ENCODE measurements at regions of chr20 and their contacts with region 1.

Region 1: GRCh38 chr20:62603021-62603906 is 39.0 kb upstream of the SLCO4A1 start:
- DNase-seq: peak; percentile 96 to 98 (median 96)
- H3K4me3 ChIP-seq: peak overlapping the region in 2 of 3 experiments; percentile 14 to 65
- H3K4me3 Mint-ChIP-seq: peak overlapping the region; percentile 69 to 89
- H3K27ac ChIP-seq: peak overlapping the region; percentile 96 to 99
- H3K27ac Mint-ChIP-seq: peak overlapping the region; percentile 97 to 99 (median 98)
- H3K4me1 ChIP-seq: peaks cover 86 to 96% of the 10 kb centered on the region in 2 donors
- H3K4me1 Mint-ChIP-seq: peaks cover 90% of the 10 kb centered on the region
- H3K27me3 ChIP-seq: no peaks in the 10 kb centered on the region
- H3K27me3 Mint-ChIP-seq: peaks cover 0 to 4% (median 0%) of the 10 kb centered on the region in 3 donors
- CTCF ChIP-seq: no peak

Region 2: DNA sequence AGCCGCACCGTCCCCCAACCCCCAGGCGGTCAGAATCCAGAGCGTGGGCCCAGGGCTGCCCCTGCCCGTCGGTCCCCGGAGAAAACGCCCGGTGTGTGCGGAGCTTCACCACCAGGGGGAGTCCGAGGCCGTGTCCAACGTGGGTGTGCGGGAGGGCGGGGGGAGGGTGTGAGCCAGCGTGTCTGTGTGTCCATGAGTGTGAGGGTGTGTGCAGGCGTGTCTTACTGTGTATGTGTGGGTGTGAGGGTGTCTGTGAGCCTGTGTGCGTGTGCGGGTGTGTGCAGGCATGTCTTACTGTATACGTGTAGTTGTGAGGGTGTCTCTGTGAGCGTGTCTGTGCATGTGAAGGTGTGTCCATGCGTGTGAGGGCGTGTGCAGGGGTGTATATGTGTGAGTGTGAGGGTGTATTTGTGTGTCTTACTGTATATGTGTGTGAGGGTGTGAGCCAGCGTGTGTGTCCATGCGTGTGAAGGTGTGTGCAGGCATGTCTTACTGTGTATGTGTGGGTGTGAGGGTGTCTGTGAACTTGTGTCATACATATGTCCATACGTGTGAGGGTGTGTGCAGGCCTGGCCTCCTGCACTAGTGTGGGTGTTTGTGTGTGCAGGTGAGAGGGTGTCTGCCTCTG is 102.9 kb before region 1 on chr20:
- intact Hi-C with region 1: loop called in 1 of 2 experiments (anchors 5 kb)
- DNase-seq: peak; percentile 65 to 83 (median 72)
- H3K4me3 ChIP-seq: no peak overlapping the region
- H3K4me3 Mint-ChIP-seq: peak overlapping the region in 1 of 2 donors; percentile 2
- H3K27ac ChIP-seq: no peak overlapping the region
- H3K27ac Mint-ChIP-seq: peak overlapping the region; percentile 12 to 85 (median 51)
- H3K4me1 ChIP-seq: peaks cover 3 to 14% of the 10 kb centered on the region in 2 donors
- H3K4me1 Mint-ChIP-seq: peaks cover 20% of the 10 kb centered on the region
- H3K27me3 ChIP-seq: peaks cover 0 to 3% of the 10 kb centered on the region in 2 donors
- H3K27me3 Mint-ChIP-seq: peaks cover 6 to 8% (median 6%) of the 10 kb centered on the region in 3 donors
- CTCF ChIP-seq: peak; percentile 80

Region 3: GRCh38 chr20:62623488-62624324 is 20.4 kb after region 1 on chr20:
- intact Hi-C with region 1: loop called in 1 of 2 experiments (anchors 1 kb)
- DNase-seq: peak; percentile 89 to 90 (median 89)
- H3K4me3 ChIP-seq: peak overlapping the region; percentile 0 to 65 (median 5)
- H3K4me3 Mint-ChIP-seq: peak overlapping the region; percentile 67 to 82
- H3K27ac ChIP-seq: peak overlapping the region; percentile 91 to 96
- H3K27ac Mint-ChIP-seq: peak overlapping the region; percentile 93 to 98 (median 95)
- H3K4me1 ChIP-seq: peaks cover 49 to 57% of the 10 kb centered on the region in 2 donors
- H3K4me1 Mint-ChIP-seq: peaks cover 49% of the 10 kb centered on the region
- H3K27me3 ChIP-seq: no peaks in the 10 kb centered on the region
- H3K27me3 Mint-ChIP-seq: peaks cover 0 to 3% (median 2%) of the 10 kb centered on the region in 3 donors
- CTCF ChIP-seq: no peak

Region 4: GRCh38 chr20:62665153-62665754 is 62.0 kb after region 1 on chr20:
- intact Hi-C with region 1: no loop called
- DNase-seq: no peak
- H3K4me3 ChIP-seq: no peak overlapping the region
- H3K4me3 Mint-ChIP-seq: no peak overlapping the region
- H3K27ac ChIP-seq: no peak overlapping the region
- H3K27ac Mint-ChIP-seq: no peak overlapping the region
- H3K4me1 ChIP-seq: peaks cover 19 to 36% of the 10 kb centered on the region in 2 donors
- H3K4me1 Mint-ChIP-seq: peaks cover 31% of the 10 kb centered on the region
- H3K27me3 ChIP-seq: no peaks in the 10 kb centered on the region
- H3K27me3 Mint-ChIP-seq: peaks cover 0 to 2% (median 1%) of the 10 kb centered on the region in 3 donors
- CTCF ChIP-seq: no peak

Region 5: DNA sequence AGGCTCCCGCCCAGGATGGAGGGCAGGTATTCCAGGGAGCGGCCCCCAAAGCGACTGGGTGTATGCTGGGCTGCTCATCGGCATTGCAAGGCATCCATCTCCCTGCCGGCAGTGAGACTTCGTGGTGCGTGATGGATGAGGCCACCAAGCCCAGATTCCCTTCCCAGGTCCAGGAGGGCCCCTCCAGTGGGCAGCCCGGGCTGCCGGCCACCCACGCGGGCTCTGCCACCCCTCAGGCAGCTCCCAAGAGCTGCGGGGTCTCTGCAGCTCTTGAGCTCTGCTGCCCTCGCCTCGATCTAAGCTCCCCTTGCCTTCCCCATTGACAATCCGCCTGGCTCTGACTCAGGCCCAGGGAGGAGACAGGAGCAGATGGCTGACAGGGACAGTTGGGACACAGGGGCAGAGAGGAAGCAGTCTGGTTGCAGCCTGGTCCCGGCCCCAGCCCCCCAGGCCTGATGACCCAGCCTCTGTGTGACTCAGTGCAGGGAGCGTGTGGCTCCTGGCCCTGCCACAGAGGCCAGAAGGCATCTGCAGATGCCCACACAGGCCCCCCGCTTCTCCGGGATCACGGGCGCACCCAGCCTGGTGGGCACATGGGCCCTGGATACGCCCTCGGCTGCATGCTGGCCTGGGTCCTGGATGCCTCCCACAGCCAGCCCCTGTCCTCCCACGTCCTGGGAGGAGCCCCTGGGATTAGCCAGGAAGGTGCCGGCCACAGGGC is 72.1 kb after region 1 on chr20:
- intact Hi-C with region 1: loop called in 1 of 2 experiments (anchors 2 kb)
- DNase-seq: peak; percentile 95 to 98 (median 97)
- H3K4me3 ChIP-seq: no peak overlapping the region
- H3K4me3 Mint-ChIP-seq: peak overlapping the region; percentile 9 to 63
- H3K27ac ChIP-seq: peak overlapping the region; percentile 14 to 86
- H3K27ac Mint-ChIP-seq: peak overlapping the region; percentile 38 to 92 (median 81)
- H3K4me1 ChIP-seq: peaks cover 71 to 94% of the 10 kb centered on the region in 2 donors
- H3K4me1 Mint-ChIP-seq: peaks cover 85% of the 10 kb centered on the region
- H3K27me3 ChIP-seq: no peaks in the 10 kb centered on the region
- H3K27me3 Mint-ChIP-seq: peaks cover 1 to 7% (median 2%) of the 10 kb centered on the region in 3 donors
- CTCF ChIP-seq: no peak

Region 6: GRCh38 chr20:62786157-62786556 is 182.9 kb after region 1 on chr20:
- intact Hi-C with region 1: loop called (anchors 2 to 5 kb)
- DNase-seq: no peak
- H3K4me3 ChIP-seq: no peak overlapping the region
- H3K4me3 Mint-ChIP-seq: no peak overlapping the region
- H3K27ac ChIP-seq: peak overlapping the region in 1 of 2 donors; percentile 92
- H3K27ac Mint-ChIP-seq: peak overlapping the region in 4 of 7 donors; percentile 19 to 84 (median 81)
- H3K4me1 ChIP-seq: peaks cover 14 to 24% of the 10 kb centered on the region in 2 donors
- H3K4me1 Mint-ChIP-seq: peaks cover 28% of the 10 kb centered on the region
- H3K27me3 ChIP-seq: no peaks in the 10 kb centered on the region
- H3K27me3 Mint-ChIP-seq: peaks cover 1 to 6% (median 4%) of the 10 kb centered on the region in 3 donors
- CTCF ChIP-seq: no peak

Region 7: GRCh38 chr20:62808211-62808865 is 205.1 kb after region 1 on chr20:
- intact Hi-C with region 1: loop called in 1 of 2 experiments (anchors 5 kb)
- DNase-seq: peak; percentile 53 to 69 (median 64)
- H3K4me3 ChIP-seq: no peak overlapping the region
- H3K4me3 Mint-ChIP-seq: no peak overlapping the region
- H3K27ac ChIP-seq: peak overlapping the region in 1 of 2 donors; percentile 15
- H3K27ac Mint-ChIP-seq: peak overlapping the region in 4 of 7 donors; percentile 12 to 71 (median 44)
- H3K4me1 ChIP-seq: peaks cover 40 to 43% of the 10 kb centered on the region in 2 donors
- H3K4me1 Mint-ChIP-seq: peaks cover 35% of the 10 kb centered on the region
- H3K27me3 ChIP-seq: no peaks in the 10 kb centered on the region
- H3K27me3 Mint-ChIP-seq: peaks cover 0 to 13% (median 7%) of the 10 kb centered on the region in 3 donors
- CTCF ChIP-seq: peak; percentile 95